Naive thymus-derived CD4-positive, alpha-beta T cell (primary cell): ENCODE measurements at regions of chr12 and their contacts with region 1.

Region 1: GRCh38 chr12:69070319-69071090 is 137.5 kb upstream of the CPM start:
- DNase-seq: peak; percentile 7 to 58 (median 45)
- ATAC-seq: peak; percentile 81
- H3K4me3 ChIP-seq: no peak overlapping the region
- H3K4me3 Mint-ChIP-seq: no peak overlapping the region
- H3K27ac ChIP-seq: no peak overlapping the region
- H3K27ac Mint-ChIP-seq: no peak overlapping the region
- H3K4me1 ChIP-seq: no peaks in the 10 kb centered on the region
- H3K4me1 Mint-ChIP-seq: peaks cover 0 to 7% (median 0%) of the 10 kb centered on the region in 7 donors
- H3K27me3 ChIP-seq: no peaks in the 10 kb centered on the region
- H3K27me3 Mint-ChIP-seq: peaks cover 10 to 16% (median 14%) of the 10 kb centered on the region in 5 donors

Region 2: GRCh38 chr12:68358532-68359485 is 711.7 kb before region 1 on chr12:
- CTCF ChIA-PET with region 1: no interaction called
- POLR2A ChIA-PET with region 1: no interaction called
- intact Hi-C with region 1: loop called in 1 of 2 experiments (anchors 1 kb)
- DNase-seq: peak in 7 of 9 donors; percentile 56 to 80 (median 76)
- ATAC-seq: peak; percentile 84
- H3K4me3 ChIP-seq: no peak overlapping the region
- H3K4me3 Mint-ChIP-seq: peak overlapping the region in 1 of 10 donors; percentile 38
- H3K27ac ChIP-seq: no peak overlapping the region
- H3K27ac Mint-ChIP-seq: peak overlapping the region in 2 of 9 donors; percentile 56 to 72
- H3K4me1 ChIP-seq: peaks cover 13 to 17% of the 10 kb centered on the region in 2 donors
- H3K4me1 Mint-ChIP-seq: peaks cover 25 to 36% (median 30%) of the 10 kb centered on the region in 7 donors
- H3K27me3 ChIP-seq: no peaks in the 10 kb centered on the region
- H3K27me3 Mint-ChIP-seq: no peaks in the 10 kb centered on the region

Region 3: GRCh38 chr12:68831272-68831671 is 239.2 kb before region 1 on chr12:
- CTCF ChIA-PET with region 1: no interaction called
- POLR2A ChIA-PET with region 1: no interaction called
- intact Hi-C with region 1: loop called (anchors 1 kb)
- DNase-seq: no peak
- ATAC-seq: no peak
- H3K4me3 ChIP-seq: no peak overlapping the region
- H3K4me3 Mint-ChIP-seq: no peak overlapping the region
- H3K27ac ChIP-seq: no peak overlapping the region
- H3K27ac Mint-ChIP-seq: peak overlapping the region in 1 of 9 donors; percentile 62
- H3K4me1 ChIP-seq: no peaks in the 10 kb centered on the region
- H3K4me1 Mint-ChIP-seq: peaks cover 8 to 25% (median 20%) of the 10 kb centered on the region in 7 donors
- H3K27me3 ChIP-seq: no peaks in the 10 kb centered on the region
- H3K27me3 Mint-ChIP-seq: no peaks in the 10 kb centered on the region

Region 4: GRCh38 chr12:68863109-68863770 is 207.3 kb before region 1 on chr12:
- CTCF ChIA-PET with region 1: no interaction called
- POLR2A ChIA-PET with region 1: no interaction called
- intact Hi-C with region 1: loop called in 1 of 2 experiments (anchors 1 kb)
- DNase-seq: no peak
- ATAC-seq: no peak
- H3K4me3 ChIP-seq: no peak overlapping the region
- H3K4me3 Mint-ChIP-seq: no peak overlapping the region
- H3K27ac ChIP-seq: no peak overlapping the region
- H3K27ac Mint-ChIP-seq: no peak overlapping the region
- H3K4me1 ChIP-seq: no peaks in the 10 kb centered on the region
- H3K4me1 Mint-ChIP-seq: peaks cover 0 to 9% (median 0%) of the 10 kb centered on the region in 7 donors
- H3K27me3 ChIP-seq: no peaks in the 10 kb centered on the region
- H3K27me3 Mint-ChIP-seq: peaks cover 0 to 7% (median 0%) of the 10 kb centered on the region in 5 donors

Region 5: GRCh38 chr12:69254046-69254445 is 183.5 kb after region 1 on chr12:
- CTCF ChIA-PET with region 1: no interaction called
- POLR2A ChIA-PET with region 1: no interaction called
- intact Hi-C with region 1: loop called in 1 of 2 experiments (anchors 2 kb)
- DNase-seq: peak in 7 of 9 donors; percentile 55 to 76 (median 67)
- ATAC-seq: peak; percentile 94
- H3K4me3 ChIP-seq: no peak overlapping the region
- H3K4me3 Mint-ChIP-seq: no peak overlapping the region
- H3K27ac ChIP-seq: peak overlapping the region; percentile 33
- H3K27ac Mint-ChIP-seq: peak overlapping the region; percentile 18 to 93 (median 53)
- H3K4me1 ChIP-seq: peaks cover 0 to 4% of the 10 kb centered on the region in 2 donors
- H3K4me1 Mint-ChIP-seq: peaks cover 19 to 56% (median 54%) of the 10 kb centered on the region in 7 donors
- H3K27me3 ChIP-seq: no peaks in the 10 kb centered on the region
- H3K27me3 Mint-ChIP-seq: no peaks in the 10 kb centered on the region